Prostate gland (tissue), 2 donors: ENCODE measurements at regions of chr22 and their contacts with region 1.

Region 1: GRCh38 chr22:18024276-18024947 is at the start of gene MICAL3:
- DNase-seq: peak; percentile 57
- H3K4me3 ChIP-seq: peak within 1 kb of the TSS; percentile 55 to 58
- H3K27ac ChIP-seq: peak within 1 kb of the TSS; percentile 76 to 88
- H3K4me1 ChIP-seq: no peaks in the 10 kb centered on the region
- H3K27me3 ChIP-seq: no peaks in the 10 kb centered on the region
- CTCF ChIP-seq: peak in 3 of 4 experiments; percentile 31 to 68 (median 66)
- POLR2A ChIP-seq: no peak
- total RNA-seq, gene MICAL3: 58.6 to 78.7 TPM

Region 2: GRCh38 chr22:18068381-18068988 is 44.1 kb after region 1 on chr22:
- intact Hi-C with region 1: loop called (anchors 2 kb)
- DNase-seq: no peak
- H3K4me3 ChIP-seq: no peak overlapping the region
- H3K27ac ChIP-seq: peak overlapping the region; percentile 84 to 86
- H3K4me1 ChIP-seq: peaks cover 11% of the 10 kb centered on the region
- H3K27me3 ChIP-seq: no peaks in the 10 kb centered on the region
- CTCF ChIP-seq: no peak
- POLR2A ChIP-seq: no peak